Activated B cell treated with CpG ODN at 0.5 μM for 24 hours (primary cell): ENCODE measurements at regions of chr9 and their contacts with region 1.

Region 1: GRCh38 chr9:128742401-128742800 is 18.5 kb upstream of the ZDHHC12 start:
- DNase-seq: no peak
- ATAC-seq: no peak
- H3K4me3 Mint-ChIP-seq: no peak overlapping the region
- H3K27ac Mint-ChIP-seq: no peak overlapping the region
- H3K4me1 Mint-ChIP-seq: no peaks in the 10 kb centered on the region
- H3K27me3 Mint-ChIP-seq: no peaks in the 10 kb centered on the region
- CTCF ChIP-seq: no peak

Region 2: GRCh38 chr9:128677794-128678193 is 64.6 kb before region 1 on chr9:
- CTCF ChIA-PET with region 1: no interaction called
- POLR2A ChIA-PET with region 1: interaction called, 10 read pairs
- intact Hi-C with region 1: no loop called
- DNase-seq: no peak
- ATAC-seq: no peak
- H3K4me3 Mint-ChIP-seq: no peak overlapping the region
- H3K27ac Mint-ChIP-seq: peak overlapping the region; percentile 42
- H3K4me1 Mint-ChIP-seq: peaks cover 15% of the 10 kb centered on the region
- H3K27me3 Mint-ChIP-seq: no peaks in the 10 kb centered on the region
- CTCF ChIP-seq: no peak